CD14-positive monocyte (primary cell): ENCODE measurements at regions of chr6 and their contacts with region 1.

Region 1: GRCh38 chr6:33788694-33789549 is at the start of gene LEMD2:
- DNase-seq: peak; percentile 84 to 93 (median 92)
- H3K4me3 ChIP-seq: peak within 1 kb of the TSS; percentile 46 to 84 (median 81)
- H3K4me3 Mint-ChIP-seq: peak within 1 kb of the TSS; percentile 96 to 97
- H3K27ac ChIP-seq: peak within 1 kb of the TSS; percentile 84 to 91
- H3K27ac Mint-ChIP-seq: peak within 1 kb of the TSS; percentile 94 to 100 (median 98)
- H3K4me1 ChIP-seq: peaks cover 18 to 28% of the 10 kb centered on the region in 2 donors
- H3K4me1 Mint-ChIP-seq: peaks cover 37% of the 10 kb centered on the region
- H3K27me3 ChIP-seq: peaks cover 0 to 14% of the 10 kb centered on the region in 2 donors
- H3K27me3 Mint-ChIP-seq: peaks cover 9 to 13% (median 12%) of the 10 kb centered on the region in 3 donors
- CTCF ChIP-seq: peak; percentile 8
- polyA plus RNA-seq, gene LEMD2: 11.4 to 59.5 (median 13.8) TPM

Region 2: GRCh38 chr6:34425498-34426410 is 636.8 kb after region 1 on chr6 and contains the start of gene RPS10:
- intact Hi-C with region 1: loop called in 1 of 2 experiments (anchors 5 kb)
- DNase-seq: peak; percentile 93 to 98 (median 96)
- H3K4me3 ChIP-seq: peak within 1 kb of the TSS; percentile 72 to 83 (median 83)
- H3K4me3 Mint-ChIP-seq: peak within 1 kb of the TSS; percentile 93
- H3K27ac ChIP-seq: peak within 1 kb of the TSS; percentile 78 to 87
- H3K27ac Mint-ChIP-seq: peak within 1 kb of the TSS; percentile 95 to 97 (median 97)
- H3K4me1 ChIP-seq: peaks cover 12% of the 10 kb centered on the region in 2 donors
- H3K4me1 Mint-ChIP-seq: peaks cover 15% of the 10 kb centered on the region
- H3K27me3 ChIP-seq: no peaks in the 10 kb centered on the region
- H3K27me3 Mint-ChIP-seq: peaks cover 0 to 5% (median 5%) of the 10 kb centered on the region in 3 donors
- CTCF ChIP-seq: no peak
- polyA plus RNA-seq, gene RPS10: 645 to 2,603 (median 1,054) TPM